Vagina (tissue), 2 donors: ENCODE measurements at regions of chr9 and their contacts with region 1.

Region 1: DNA sequence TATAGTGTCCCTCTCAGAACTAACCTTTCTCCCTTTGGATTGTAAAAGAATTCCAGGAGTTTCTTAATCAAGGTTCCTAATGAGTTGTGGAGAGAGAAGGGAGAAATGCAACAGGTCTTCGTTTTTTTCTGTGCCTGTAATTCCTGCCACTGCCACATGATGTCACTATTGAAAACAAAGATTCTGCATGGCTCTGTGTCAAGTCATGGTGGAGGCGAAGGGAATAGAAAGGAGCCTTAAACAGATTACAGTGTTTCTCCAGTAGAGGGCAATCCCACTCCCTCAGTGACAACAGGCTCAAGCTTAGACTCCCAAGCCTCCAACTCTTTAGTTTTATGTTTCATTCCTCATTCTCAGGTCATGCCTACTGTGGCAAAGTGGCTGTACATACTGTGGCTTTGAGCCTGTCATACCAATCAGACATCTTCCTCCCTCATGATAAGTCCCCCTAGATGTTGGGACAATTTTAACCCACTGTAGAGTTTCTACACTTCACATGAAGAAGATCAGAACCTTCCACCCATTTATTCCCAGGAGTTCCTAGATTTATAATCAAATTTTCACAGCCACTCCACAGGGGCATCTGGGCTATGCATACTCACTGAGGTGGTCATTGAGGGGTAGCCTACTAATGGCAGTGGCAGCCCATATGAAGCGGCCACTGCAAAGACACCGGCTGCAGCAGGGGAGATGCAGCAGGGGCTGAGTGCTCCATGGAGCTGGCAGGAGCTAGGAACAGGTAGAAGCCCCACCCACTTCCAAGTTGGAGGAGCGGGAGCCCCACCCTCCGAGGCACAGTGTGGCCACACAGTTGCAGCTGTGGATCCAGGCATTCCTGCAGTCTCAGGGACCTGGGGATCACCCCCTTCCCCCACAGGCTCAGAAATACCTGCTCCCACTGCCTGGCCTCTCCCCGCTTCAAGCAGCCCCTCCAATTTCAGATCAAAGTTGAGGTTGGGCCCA is 97.4 kb upstream of the TRIM32 start:
- DNase-seq: no peak
- H3K4me3 ChIP-seq: no peak overlapping the region
- H3K27ac ChIP-seq: no peak overlapping the region
- H3K4me1 ChIP-seq: peaks cover 9% of the 10 kb centered on the region
- H3K27me3 ChIP-seq: no peaks in the 10 kb centered on the region
- CTCF ChIP-seq: peak in 2 of 3 experiments; percentile 9
- POLR2A ChIP-seq: no peak

Region 2: DNA sequence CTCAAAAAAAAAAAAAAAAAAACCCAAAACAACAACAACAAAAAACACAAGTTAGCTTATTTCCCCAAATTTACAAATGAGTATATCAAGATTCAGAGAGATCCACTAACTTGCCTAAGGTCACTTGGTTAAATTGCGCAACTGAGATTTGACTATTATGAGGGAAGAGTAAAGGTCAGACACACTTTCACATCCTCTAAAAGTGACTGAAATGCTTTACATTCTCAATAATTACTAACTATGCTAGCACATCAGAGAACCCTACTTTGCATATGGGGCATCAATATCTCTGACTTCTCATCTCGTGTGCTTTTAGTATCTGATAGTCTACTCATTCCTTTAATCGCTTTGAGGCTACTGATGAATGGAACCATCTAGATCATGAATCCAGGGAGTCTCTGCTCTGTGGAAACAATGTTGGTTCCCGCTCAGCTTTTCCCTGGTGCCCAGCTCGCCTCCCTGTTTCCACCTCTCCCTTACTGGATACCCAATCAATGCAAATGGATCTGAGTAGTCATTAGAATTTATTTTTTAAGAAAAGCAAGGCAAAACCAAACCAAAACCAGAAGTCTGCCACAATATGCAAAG is 84.7 kb before region 1 on chr9:
- intact Hi-C with region 1: no loop called
- DNase-seq: no peak
- H3K4me3 ChIP-seq: no peak overlapping the region
- H3K27ac ChIP-seq: no peak overlapping the region
- H3K4me1 ChIP-seq: no peaks in the 10 kb centered on the region
- H3K27me3 ChIP-seq: no peaks in the 10 kb centered on the region
- CTCF ChIP-seq: no peak
- POLR2A ChIP-seq: no peak

Region 3: GRCh38 chr9:116632990-116633838 is 43.5 kb after region 1 on chr9:
- intact Hi-C with region 1: loop called (anchors 10 kb)
- DNase-seq: no peak
- H3K4me3 ChIP-seq: no peak overlapping the region
- H3K27ac ChIP-seq: no peak overlapping the region
- H3K4me1 ChIP-seq: no peaks in the 10 kb centered on the region
- H3K27me3 ChIP-seq: no peaks in the 10 kb centered on the region
- CTCF ChIP-seq: no peak
- POLR2A ChIP-seq: no peak

Region 4: GRCh38 chr9:116646661-116647512 is 57.2 kb after region 1 on chr9:
- intact Hi-C with region 1: no loop called
- DNase-seq: no peak
- H3K4me3 ChIP-seq: no peak overlapping the region
- H3K27ac ChIP-seq: peak overlapping the region; percentile 10
- H3K4me1 ChIP-seq: peaks cover 13% of the 10 kb centered on the region
- H3K27me3 ChIP-seq: no peaks in the 10 kb centered on the region
- CTCF ChIP-seq: peak in 2 of 3 experiments; percentile 22 to 48
- POLR2A ChIP-seq: no peak